Dendritic cell treated with granulocyte-macrophage colony-stimulating factor and Interleukin-4, amounts not matched to agents 40 ng/mL and 50 ng/mL, for 4 days (primary cell): ENCODE measurements at regions of chr21 and their contacts with region 1.

Region 1: DNA sequence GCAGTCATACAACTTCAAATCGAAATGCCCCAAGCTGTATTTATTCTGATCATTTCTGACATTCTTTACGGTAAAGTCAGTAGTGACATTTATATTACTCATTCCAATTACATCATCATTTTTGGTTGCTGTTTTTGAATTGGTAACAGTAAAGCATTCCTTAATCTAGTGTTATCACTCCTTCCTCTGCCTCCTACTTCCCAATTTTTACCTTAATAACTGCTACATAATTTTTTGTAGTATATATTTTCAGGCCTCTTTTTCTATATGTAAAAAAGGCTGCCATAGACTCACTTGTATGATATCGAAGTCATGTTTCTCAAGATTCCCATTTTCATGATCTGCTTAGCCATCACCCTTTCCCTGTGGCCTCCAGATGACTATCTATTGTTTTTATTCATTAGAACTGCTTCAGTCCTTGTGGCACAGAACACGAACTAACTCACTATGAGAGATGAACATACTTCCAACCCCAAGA is 167.2 kb downstream of the RUNX1 start:
- H3K4me3 Mint-ChIP-seq: peak overlapping the region; percentile 63
- H3K27ac Mint-ChIP-seq: peak overlapping the region; percentile 97
- H3K4me1 Mint-ChIP-seq: peaks cover 30% of the 10 kb centered on the region
- H3K27me3 Mint-ChIP-seq: no peaks in the 10 kb centered on the region

Region 2: DNA sequence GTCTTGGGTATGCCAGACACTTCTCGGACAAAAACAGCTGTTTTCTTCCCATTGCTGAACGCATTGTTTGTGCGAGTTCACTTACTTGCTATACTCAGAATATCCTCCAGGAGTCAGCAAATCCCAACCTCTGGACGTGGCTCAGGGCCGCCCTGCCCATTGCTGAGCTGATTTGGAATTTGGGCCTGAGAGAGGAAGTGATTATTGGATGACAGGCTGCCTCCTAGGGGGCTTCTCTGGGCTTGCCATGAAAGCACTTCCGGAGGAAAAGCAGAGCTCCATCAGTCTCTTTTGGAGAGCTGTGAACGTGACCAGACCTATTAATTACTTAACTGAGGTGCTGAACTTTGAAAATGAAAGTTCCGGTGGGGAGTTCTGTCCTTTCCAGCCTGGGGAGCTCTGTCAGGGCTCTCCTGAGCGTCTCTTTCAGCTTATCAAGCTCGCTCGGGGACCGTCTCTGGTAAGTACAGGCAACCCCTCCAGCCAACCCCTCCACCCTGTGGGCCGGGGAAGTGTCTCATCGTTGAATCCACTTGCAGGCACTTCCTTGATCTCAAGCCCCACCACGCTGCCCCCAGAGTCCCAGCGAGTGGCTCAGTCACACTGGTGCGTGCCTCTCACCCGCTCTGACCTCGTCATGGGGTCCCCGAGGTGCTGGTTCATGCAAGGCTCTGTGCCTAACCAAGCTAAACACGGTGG is 136.2 kb before region 1 on chr21:
- intact Hi-C with region 1: loop called (anchors 5 kb)
- H3K4me3 Mint-ChIP-seq: peak overlapping the region; percentile 57
- H3K27ac Mint-ChIP-seq: no peak overlapping the region
- H3K4me1 Mint-ChIP-seq: no peaks in the 10 kb centered on the region
- H3K27me3 Mint-ChIP-seq: peaks cover 26% of the 10 kb centered on the region

Region 3: DNA sequence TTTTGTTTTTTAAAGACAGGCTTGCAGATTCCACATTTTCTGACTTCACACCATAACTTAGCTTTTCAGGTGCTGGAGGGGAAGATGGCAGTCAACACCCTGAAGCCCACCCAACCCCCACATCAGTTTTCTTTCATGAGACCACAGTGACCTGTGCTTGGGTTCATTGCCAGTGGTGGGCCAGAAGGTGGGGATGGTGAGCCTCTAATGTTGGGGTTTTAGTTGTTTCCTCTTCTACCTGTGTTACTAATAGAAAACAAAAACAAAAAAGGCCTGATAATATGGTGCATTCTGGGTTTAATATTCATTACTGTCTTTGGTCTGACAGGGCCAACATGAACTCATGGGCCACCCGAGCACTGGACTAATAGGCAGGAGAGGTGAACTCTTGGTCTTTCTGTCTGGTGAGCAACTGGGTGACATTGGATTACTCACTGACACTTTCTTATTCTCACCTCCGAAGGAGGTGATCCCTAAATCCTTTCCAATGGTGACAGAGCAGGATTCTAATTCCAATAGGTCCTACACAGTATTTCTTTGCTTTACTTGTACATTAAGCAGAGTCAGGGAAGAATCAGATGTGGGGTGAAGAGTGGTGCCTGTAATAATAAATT is 80.3 kb before region 1 on chr21:
- intact Hi-C with region 1: loop called (anchors 5 kb)
- H3K4me3 Mint-ChIP-seq: no peak overlapping the region
- H3K27ac Mint-ChIP-seq: peak overlapping the region; percentile 32
- H3K4me1 Mint-ChIP-seq: peaks cover 53% of the 10 kb centered on the region
- H3K27me3 Mint-ChIP-seq: no peaks in the 10 kb centered on the region

Region 4: GRCh38 chr21:34865928-34866284 is 16.0 kb before region 1 on chr21:
- intact Hi-C with region 1: loop called (anchors 2 kb)
- H3K4me3 Mint-ChIP-seq: peak overlapping the region; percentile 44
- H3K27ac Mint-ChIP-seq: peak overlapping the region; percentile 81
- H3K4me1 Mint-ChIP-seq: peaks cover 91% of the 10 kb centered on the region
- H3K27me3 Mint-ChIP-seq: peaks cover 1% of the 10 kb centered on the region

Region 5: DNA sequence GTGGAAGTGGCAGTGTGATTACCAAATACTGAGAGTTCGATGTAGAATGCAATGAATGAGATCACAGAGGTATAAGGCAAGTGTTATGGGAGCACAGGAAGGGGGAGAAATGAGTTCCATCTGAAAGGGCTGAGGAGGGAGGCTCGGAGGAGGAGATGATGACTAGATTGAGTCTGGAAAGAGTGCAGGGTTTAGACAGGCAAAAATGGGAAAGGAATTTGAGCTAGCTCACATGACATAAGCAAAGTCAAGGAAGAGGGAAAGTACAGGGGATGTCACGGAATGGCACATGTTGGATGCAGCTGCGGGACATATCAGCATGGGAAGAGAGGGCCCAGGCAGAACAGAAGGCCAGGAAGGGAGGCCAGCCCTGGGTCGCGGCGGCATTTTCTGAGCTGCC is 34.5 kb after region 1 on chr21:
- intact Hi-C with region 1: no loop called
- H3K4me3 Mint-ChIP-seq: no peak overlapping the region
- H3K27ac Mint-ChIP-seq: no peak overlapping the region
- H3K4me1 Mint-ChIP-seq: peaks cover 63% of the 10 kb centered on the region
- H3K27me3 Mint-ChIP-seq: no peaks in the 10 kb centered on the region